PC-3 (cell line): ENCODE measurements at regions of chr6 and their contacts with region 1.

Region 1: GRCh38 chr6:107657755-107658461 is 166.2 kb downstream of the SCML4 start:
- DNase-seq: no peak
- ATAC-seq: no peak
- H3K4me3 ChIP-seq: no peak overlapping the region
- H3K27ac ChIP-seq: no peak overlapping the region
- H3K4me1 ChIP-seq: peaks cover 24% of the 10 kb centered on the region
- H3K27me3 ChIP-seq: no peaks in the 10 kb centered on the region
- CTCF ChIP-seq: no peak

Region 2: GRCh38 chr6:107489636-107490565 is 168.0 kb before region 1 on chr6 and contains the start of gene SOBP:
- CTCF ChIA-PET with region 1: interaction called, 6 read pairs
- POLR2A ChIA-PET with region 1: interaction called, 11 read pairs
- intact Hi-C with region 1: no loop called
- DNase-seq: no peak
- ATAC-seq: peak; percentile 72
- H3K4me3 ChIP-seq: peak within 1 kb of the TSS; percentile 74
- H3K27ac ChIP-seq: no peak within 1 kb of the TSS
- H3K4me1 ChIP-seq: no peaks in the 10 kb centered on the region
- H3K27me3 ChIP-seq: peaks cover 62% of the 10 kb centered on the region
- CTCF ChIP-seq: no peak
- total RNA-seq, gene SOBP: 0.15 and 0.17 TPM in 2 replicates

Region 3: GRCh38 chr6:107532706-107533105 is 125.2 kb before region 1 on chr6:
- CTCF ChIA-PET with region 1: no interaction called
- POLR2A ChIA-PET with region 1: no interaction called
- intact Hi-C with region 1: no loop called
- DNase-seq: no peak
- ATAC-seq: no peak
- H3K4me3 ChIP-seq: no peak overlapping the region
- H3K27ac ChIP-seq: no peak overlapping the region
- H3K4me1 ChIP-seq: no peaks in the 10 kb centered on the region
- H3K27me3 ChIP-seq: peaks cover 20% of the 10 kb centered on the region
- CTCF ChIP-seq: no peak